Caco-2 (cell line): ENCODE measurements at regions of chr5 and their contacts with region 1.

Region 1: GRCh38 chr5:43348207-43348606 is 35.0 kb upstream of the HMGCS1 start:
- DNase-seq: peak; percentile 84 to 92
- H3K4me3 ChIP-seq: no peak overlapping the region
- H3K4me3 Mint-ChIP-seq: peak overlapping the region; percentile 49
- H3K27ac Mint-ChIP-seq: peak overlapping the region; percentile 65
- H3K4me1 ChIP-seq: peaks cover 45% of the 10 kb centered on the region
- H3K4me1 Mint-ChIP-seq: peaks cover 35% of the 10 kb centered on the region
- H3K27me3 ChIP-seq: no peaks in the 10 kb centered on the region
- H3K27me3 Mint-ChIP-seq: no peaks in the 10 kb centered on the region
- CTCF ChIP-seq: no peak

Region 2: DNA sequence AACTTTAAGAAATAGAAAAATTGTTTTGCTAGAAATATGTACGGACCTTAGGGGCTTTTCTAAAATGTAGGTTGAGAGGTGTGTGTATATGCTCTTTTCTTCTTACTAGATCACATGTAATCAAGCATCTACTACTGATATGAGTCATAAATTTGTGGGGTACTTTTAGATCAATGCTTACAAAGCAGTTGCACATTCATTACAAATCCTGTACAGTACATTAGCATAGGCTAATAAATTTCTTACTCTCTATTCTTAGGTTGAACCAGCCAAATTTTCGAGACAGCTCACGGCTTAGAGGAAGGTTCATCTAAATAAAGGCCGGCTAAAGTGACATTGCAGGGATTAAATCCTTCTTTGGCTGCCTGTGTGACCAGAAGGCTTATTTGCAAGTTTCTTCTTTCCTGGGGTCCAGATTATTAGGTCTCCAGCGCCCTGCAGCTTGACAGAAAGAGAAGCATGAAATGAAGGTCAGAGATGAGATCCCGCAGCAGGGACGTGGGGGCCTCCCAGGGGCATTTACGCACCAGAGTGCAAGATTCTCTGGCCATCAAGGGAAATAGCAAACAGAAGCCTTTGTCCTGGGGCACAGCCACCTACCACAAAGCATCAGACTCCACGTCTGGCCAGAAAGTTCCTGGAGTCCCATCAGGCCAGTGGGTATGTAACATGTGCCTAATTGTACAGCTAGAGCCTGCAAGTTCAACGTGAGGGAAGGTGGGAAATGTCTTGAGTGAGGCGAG is 103.2 kb before region 1 on chr5:
- CTCF ChIA-PET with region 1: no interaction called
- POLR2A ChIA-PET with region 1: no interaction called
- intact Hi-C with region 1: no loop called
- DNase-seq: no peak
- H3K4me3 ChIP-seq: no peak overlapping the region
- H3K4me3 Mint-ChIP-seq: no peak overlapping the region
- H3K27ac Mint-ChIP-seq: no peak overlapping the region
- H3K4me1 ChIP-seq: no peaks in the 10 kb centered on the region
- H3K4me1 Mint-ChIP-seq: no peaks in the 10 kb centered on the region
- H3K27me3 ChIP-seq: no peaks in the 10 kb centered on the region
- H3K27me3 Mint-ChIP-seq: peaks cover 9% of the 10 kb centered on the region
- CTCF ChIP-seq: no peak

Region 3: GRCh38 chr5:43369651-43370050 is 21.4 kb after region 1 on chr5:
- CTCF ChIA-PET with region 1: no interaction called
- POLR2A ChIA-PET with region 1: no interaction called
- intact Hi-C with region 1: loop called (anchors 1 kb)
- DNase-seq: no peak
- H3K4me3 ChIP-seq: no peak overlapping the region
- H3K4me3 Mint-ChIP-seq: no peak overlapping the region
- H3K27ac Mint-ChIP-seq: peak overlapping the region; percentile 73
- H3K4me1 ChIP-seq: peaks cover 35% of the 10 kb centered on the region
- H3K4me1 Mint-ChIP-seq: peaks cover 23% of the 10 kb centered on the region
- H3K27me3 ChIP-seq: no peaks in the 10 kb centered on the region
- H3K27me3 Mint-ChIP-seq: no peaks in the 10 kb centered on the region
- CTCF ChIP-seq: no peak